CD4-positive, alpha-beta memory T cell (primary cell): ENCODE measurements at regions of chr19 and their contacts with region 1.

Region 1: GRCh38 chr19:1929021-1929742 is 11.8 kb upstream of the CSNK1G2 start:
- DNase-seq: peak; percentile 72 to 82 (median 76)
- H3K4me3 ChIP-seq: peak overlapping the region in 1 of 2 donors; percentile 13
- H3K4me3 Mint-ChIP-seq: peak overlapping the region; percentile 68 to 86 (median 78)
- H3K27ac ChIP-seq: no peak overlapping the region
- H3K27ac Mint-ChIP-seq: peak overlapping the region; percentile 50 to 91 (median 67)
- H3K4me1 ChIP-seq: peaks cover 31% of the 10 kb centered on the region
- H3K4me1 Mint-ChIP-seq: peaks cover 15 to 34% (median 24%) of the 10 kb centered on the region in 4 donors
- H3K27me3 ChIP-seq: no peaks in the 10 kb centered on the region
- H3K27me3 Mint-ChIP-seq: no peaks in the 10 kb centered on the region

Region 2: DNA sequence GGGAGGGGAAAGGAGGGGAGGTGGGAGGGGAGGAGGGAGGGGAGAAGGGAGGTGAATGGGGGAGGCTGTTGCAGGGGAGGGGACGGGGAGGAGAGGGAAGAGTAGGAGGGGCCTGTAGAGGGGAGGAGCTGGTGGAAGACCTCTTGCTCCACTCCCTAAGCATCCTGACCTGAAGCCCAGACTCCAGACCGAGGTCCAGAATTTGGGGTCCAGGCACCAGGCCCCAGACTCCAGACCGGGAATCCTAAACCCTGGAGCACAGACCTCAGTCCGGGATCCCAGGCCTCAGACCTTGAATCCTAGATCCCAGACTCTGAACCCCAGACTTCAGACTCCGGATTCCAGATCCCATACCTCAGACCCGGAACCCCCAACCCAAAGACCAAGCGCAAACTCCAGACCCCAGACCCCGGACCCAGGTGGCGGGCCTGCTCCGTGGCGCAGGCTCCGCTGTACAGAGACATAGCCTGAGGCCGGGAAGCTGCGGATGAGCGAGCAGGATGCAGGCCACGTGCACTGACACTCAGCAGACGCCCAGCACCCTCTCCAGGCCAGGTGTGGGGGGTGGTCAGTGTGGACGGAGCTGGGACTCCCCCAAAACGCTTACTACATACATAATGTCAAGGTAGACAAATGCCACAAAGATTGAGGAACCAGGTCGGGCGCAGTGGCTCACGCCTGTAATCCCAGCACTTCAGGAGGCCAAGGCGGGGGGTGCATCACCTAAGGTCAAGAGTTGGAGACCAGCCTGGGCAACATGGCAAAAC is 87.0 kb after region 1 on chr19:
- CTCF ChIA-PET with region 1: interaction called, 9 read pairs
- POLR2A ChIA-PET with region 1: interaction called, 3 read pairs
- intact Hi-C with region 1: loop called (anchors 1 kb)
- DNase-seq: peak; percentile 43 to 78 (median 55)
- H3K4me3 ChIP-seq: no peak overlapping the region
- H3K4me3 Mint-ChIP-seq: peak overlapping the region; percentile 43 to 65 (median 60)
- H3K27ac ChIP-seq: peak overlapping the region; percentile 18
- H3K27ac Mint-ChIP-seq: peak overlapping the region in 6 of 7 donors; percentile 36 to 91 (median 64)
- H3K4me1 ChIP-seq: peaks cover 16% of the 10 kb centered on the region
- H3K4me1 Mint-ChIP-seq: peaks cover 7 to 25% (median 16%) of the 10 kb centered on the region in 4 donors
- H3K27me3 ChIP-seq: no peaks in the 10 kb centered on the region
- H3K27me3 Mint-ChIP-seq: no peaks in the 10 kb centered on the region

Region 3: DNA sequence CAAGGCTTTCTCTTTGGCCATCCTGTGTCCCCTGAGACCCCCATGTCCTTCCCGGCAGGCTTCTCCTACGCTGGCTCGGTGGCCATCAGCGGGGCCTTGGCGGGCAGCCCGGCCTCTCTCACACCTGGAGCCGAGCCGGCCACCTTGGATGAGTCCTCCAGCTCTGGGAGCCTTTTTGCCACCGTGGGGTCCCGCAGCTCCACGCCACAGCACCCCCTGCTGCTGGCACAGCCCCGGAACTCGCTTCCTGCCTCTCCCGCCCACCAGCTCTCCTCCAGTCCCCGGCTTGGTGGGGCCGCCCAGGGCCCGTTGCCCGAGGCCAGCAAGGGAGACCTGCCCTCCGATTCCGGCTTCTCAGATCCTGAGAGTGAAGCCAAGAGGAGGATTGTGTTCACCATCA is 292.7 kb after region 1 on chr19:
- CTCF ChIA-PET with region 1: no interaction called
- POLR2A ChIA-PET with region 1: no interaction called
- intact Hi-C with region 1: no loop called
- DNase-seq: no peak
- H3K4me3 ChIP-seq: no peak overlapping the region
- H3K4me3 Mint-ChIP-seq: no peak overlapping the region
- H3K27ac ChIP-seq: no peak overlapping the region
- H3K27ac Mint-ChIP-seq: no peak overlapping the region
- H3K4me1 ChIP-seq: no peaks in the 10 kb centered on the region
- H3K4me1 Mint-ChIP-seq: peaks cover 0 to 7% (median 2%) of the 10 kb centered on the region in 4 donors
- H3K27me3 ChIP-seq: no peaks in the 10 kb centered on the region
- H3K27me3 Mint-ChIP-seq: no peaks in the 10 kb centered on the region